H1 (cell line): ENCODE measurements at regions of chr2 and their contacts with region 1.

Region 1: DNA sequence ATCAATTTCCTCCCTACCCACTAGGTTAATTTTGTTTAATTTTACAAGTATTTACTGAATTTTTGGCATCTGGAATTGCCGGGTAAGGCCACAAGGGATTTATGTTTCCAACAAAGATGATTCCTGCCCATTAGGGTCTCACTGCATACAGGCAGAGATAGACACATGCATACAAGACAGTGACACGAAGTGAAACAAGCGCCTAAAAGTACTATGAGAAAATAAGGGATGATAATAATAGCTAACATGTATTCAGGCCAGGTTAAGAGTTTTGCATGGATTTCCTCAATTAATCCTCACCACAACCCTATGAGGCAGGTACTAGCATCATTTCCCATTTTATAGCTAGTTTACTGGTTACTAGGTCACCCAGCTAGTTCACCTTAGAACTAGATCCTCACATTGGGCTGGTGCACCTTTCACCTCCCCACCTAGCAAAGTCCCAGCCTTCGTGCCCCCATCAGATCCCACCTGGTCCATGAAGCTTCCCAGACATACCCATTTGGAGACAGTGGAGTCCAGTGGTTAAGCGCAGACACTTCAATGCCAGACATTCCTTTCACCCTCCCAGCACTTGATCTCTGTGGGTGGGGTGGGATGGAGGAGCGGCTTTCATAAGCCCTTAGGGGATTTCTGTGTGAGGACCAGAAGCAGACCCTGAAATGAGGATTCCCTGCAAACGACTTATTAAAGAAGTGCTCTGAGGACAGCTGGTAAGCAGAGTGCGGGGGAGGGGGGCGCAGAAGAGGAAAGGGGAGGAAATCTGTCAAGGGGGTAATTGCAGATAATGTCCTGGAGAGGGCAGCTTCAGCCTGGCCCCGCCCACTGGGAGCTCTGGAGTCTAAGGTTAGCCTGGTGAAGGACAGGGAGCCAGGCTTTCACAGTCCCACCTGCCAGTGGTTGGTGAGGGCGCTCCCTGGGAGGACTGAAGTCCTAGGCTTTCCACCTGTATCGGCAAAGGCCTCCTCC is 5.8 kb upstream of the DGUOK start:
- DNase-seq: peak; percentile 38 to 87
- H3K4me3 ChIP-seq: peak overlapping the region in 1 of 4 experiments; percentile 23; a peak in 1 of 8 replicates
- H3K27ac ChIP-seq: no peak overlapping the region
- H3K4me1 ChIP-seq: peaks cover 3 to 8% (median 5%) of the 10 kb centered on the region in 4 experiments; a peak in 6 of 7 replicates
- H3K27me3 ChIP-seq: no peaks in the 10 kb centered on the region
- CTCF ChIP-seq: peak; percentile 61 to 72 (median 68)
- EP300 ChIP-seq: no peak
- POLR2A ChIP-seq: peak in 1 of 2 experiments; percentile 46; a peak in 1 of 3 replicates
- RAD21 ChIP-seq: peak; percentile 51 to 58; a peak in 3 of 4 replicates

Region 2: GRCh38 chr2:73907840-73908452 is 12.9 kb before region 1 on chr2:
- CTCF ChIA-PET with region 1: interaction called, 24 read pairs
- POLR2A ChIA-PET with region 1: interaction called, 5 read pairs
- DNase-seq: peak; percentile 27 to 64
- H3K4me3 ChIP-seq: no peak overlapping the region
- H3K27ac ChIP-seq: no peak overlapping the region
- H3K4me1 ChIP-seq: peaks cover 0 to 5% (median under 1%) of the 10 kb centered on the region in 4 experiments; a peak in 2 of 7 replicates
- H3K27me3 ChIP-seq: no peaks in the 10 kb centered on the region
- CTCF ChIP-seq: peak; percentile 62 to 81 (median 62)
- EP300 ChIP-seq: no peak
- POLR2A ChIP-seq: peak in 1 of 2 experiments; percentile 48; a peak in 2 of 3 replicates
- RAD21 ChIP-seq: peak; percentile 69 to 80